Calu3 (cell line): ENCODE measurements at regions of chrX and their contacts with region 1.

Region 1: GRCh38 chrX:81957900-81958545 is 756.1 kb downstream of the SH3BGRL start:
- DNase-seq: peak; percentile 23
- H3K4me3 Mint-ChIP-seq: no peak overlapping the region
- H3K27ac Mint-ChIP-seq: no peak overlapping the region
- H3K4me1 Mint-ChIP-seq: no peaks in the 10 kb centered on the region
- H3K27me3 Mint-ChIP-seq: no peaks in the 10 kb centered on the region
- CTCF ChIP-seq: no peak

Region 2: GRCh38 chrX:81729269-81729777 is 228.7 kb before region 1 on chrX:
- CTCF ChIA-PET with region 1: no interaction called
- intact Hi-C with region 1: no loop called
- DNase-seq: no peak
- H3K4me3 Mint-ChIP-seq: no peak overlapping the region
- H3K27ac Mint-ChIP-seq: no peak overlapping the region
- H3K4me1 Mint-ChIP-seq: no peaks in the 10 kb centered on the region
- H3K27me3 Mint-ChIP-seq: no peaks in the 10 kb centered on the region
- CTCF ChIP-seq: no peak

Region 3: DNA sequence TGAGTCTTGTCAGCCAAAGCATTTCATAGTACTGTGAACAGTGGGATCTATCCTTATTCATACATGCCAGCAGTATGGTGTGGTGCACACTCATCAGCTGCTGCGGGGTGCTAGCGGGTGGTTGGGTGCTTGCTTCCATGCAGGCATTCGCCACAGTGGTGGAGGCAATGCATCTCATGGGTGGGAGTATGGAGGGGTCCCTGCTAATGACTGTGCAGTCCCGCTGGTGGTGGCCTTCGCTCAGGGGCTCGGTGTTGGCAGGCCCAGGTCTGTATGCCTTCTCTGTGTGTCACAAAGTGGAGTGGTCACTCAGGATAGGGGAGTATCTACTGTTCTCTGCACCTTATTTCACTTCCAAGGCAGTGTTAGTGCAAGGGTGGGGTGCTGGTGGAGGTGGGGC is 1672.6 kb after region 1 on chrX:
- CTCF ChIA-PET with region 1: interaction called, 4 read pairs
- intact Hi-C with region 1: loop called (anchors 10 kb)
- DNase-seq: no peak
- H3K4me3 Mint-ChIP-seq: no peak overlapping the region
- H3K27ac Mint-ChIP-seq: no peak overlapping the region
- H3K4me1 Mint-ChIP-seq: no peaks in the 10 kb centered on the region
- H3K27me3 Mint-ChIP-seq: no peaks in the 10 kb centered on the region
- CTCF ChIP-seq: no peak